ENCODE measurements at regions of chr14 and their contacts with region 1.

Region 1: GRCh38 chr14:96567289-96567899 is 65.2 kb downstream of the PAPOLA start:
- DNase-seq: peak in 1 of 2 donors; percentile 53
- ATAC-seq: peak in 1 of 3 donors; percentile 53
- H3K4me3 ChIP-seq: no peak overlapping the region
- H3K4me3 Mint-ChIP-seq: no peak overlapping the region
- H3K27ac ChIP-seq: no peak overlapping the region
- H3K27ac Mint-ChIP-seq: no peak overlapping the region
- H3K4me1 ChIP-seq: no peaks in the 10 kb centered on the region
- H3K4me1 Mint-ChIP-seq: peaks cover 0 to 5% of the 10 kb centered on the region in 2 donors
- H3K27me3 ChIP-seq: no peaks in the 10 kb centered on the region
- H3K27me3 Mint-ChIP-seq: no peaks in the 10 kb centered on the region
- CTCF ChIP-seq: peak; percentile 24

Region 2: DNA sequence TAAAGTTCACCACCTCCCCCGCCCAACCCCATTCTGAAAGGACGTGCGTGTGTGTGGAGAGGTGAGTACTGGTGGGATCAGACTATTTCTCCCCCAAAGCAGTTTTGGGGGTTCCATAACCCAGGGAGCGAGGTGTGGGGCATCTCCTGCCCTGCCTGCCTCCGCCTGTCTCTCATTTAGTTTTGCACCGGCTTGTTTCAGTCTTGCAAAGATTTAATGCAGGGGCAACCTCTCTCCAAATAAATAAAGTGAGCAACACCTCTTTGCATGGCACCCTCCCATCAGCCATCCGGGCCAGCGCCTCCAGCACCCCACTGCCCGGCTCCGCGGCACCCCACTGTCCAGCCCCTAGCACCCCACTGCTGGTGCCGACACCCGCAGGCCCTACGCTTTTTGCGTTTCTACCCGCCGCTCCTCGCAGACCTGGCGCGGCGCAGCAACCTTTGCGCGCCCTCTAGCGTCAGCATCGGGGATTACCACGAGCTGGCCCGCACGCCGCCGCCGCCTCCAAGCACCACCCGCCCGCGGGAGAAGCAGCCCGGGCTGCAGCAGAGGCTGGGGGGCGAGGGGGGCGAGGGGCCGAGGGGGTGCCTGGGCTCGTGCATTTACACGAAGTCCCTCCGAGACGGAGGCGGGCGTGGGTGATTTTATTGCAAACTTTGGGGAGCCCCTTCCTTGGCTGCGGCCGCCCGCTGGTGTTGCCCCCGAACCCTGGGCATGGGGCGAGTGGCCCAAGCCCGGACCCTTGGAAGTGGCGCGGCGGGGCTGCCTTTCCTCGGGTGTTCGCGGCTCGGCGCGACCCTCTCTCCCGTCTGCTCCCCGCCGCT is 174.0 kb after region 1 on chr14:
- intact Hi-C with region 1: loop called (anchors 2 kb)
- DNase-seq: peak; percentile 70 to 82
- ATAC-seq: peak; percentile 91 to 99 (median 97)
- H3K4me3 ChIP-seq: no peak overlapping the region
- H3K4me3 Mint-ChIP-seq: peak overlapping the region; percentile 55
- H3K27ac ChIP-seq: no peak overlapping the region
- H3K27ac Mint-ChIP-seq: no peak overlapping the region
- H3K4me1 ChIP-seq: peaks cover 5% of the 10 kb centered on the region
- H3K4me1 Mint-ChIP-seq: peaks cover 5 to 10% of the 10 kb centered on the region in 2 donors
- H3K27me3 ChIP-seq: peaks cover 19% of the 10 kb centered on the region
- H3K27me3 Mint-ChIP-seq: peaks cover 52 to 65% of the 10 kb centered on the region in 2 donors
- CTCF ChIP-seq: peak; percentile 97

Measured in natural killer cell (primary cell).